Activated B cell treated with CpG ODN at 0.5 μM for 24 hours (primary cell): ENCODE measurements at regions of chr21 and their contacts with region 1.

Region 1: GRCh38 chr21:37445228-37445627 is 78.7 kb downstream of the DYRK1A start:
- DNase-seq: no peak
- ATAC-seq: no peak
- H3K4me3 Mint-ChIP-seq: no peak overlapping the region
- H3K27ac Mint-ChIP-seq: no peak overlapping the region
- H3K4me1 Mint-ChIP-seq: peaks cover 78% of the 10 kb centered on the region
- H3K27me3 Mint-ChIP-seq: no peaks in the 10 kb centered on the region
- CTCF ChIP-seq: no peak

Region 2: DNA sequence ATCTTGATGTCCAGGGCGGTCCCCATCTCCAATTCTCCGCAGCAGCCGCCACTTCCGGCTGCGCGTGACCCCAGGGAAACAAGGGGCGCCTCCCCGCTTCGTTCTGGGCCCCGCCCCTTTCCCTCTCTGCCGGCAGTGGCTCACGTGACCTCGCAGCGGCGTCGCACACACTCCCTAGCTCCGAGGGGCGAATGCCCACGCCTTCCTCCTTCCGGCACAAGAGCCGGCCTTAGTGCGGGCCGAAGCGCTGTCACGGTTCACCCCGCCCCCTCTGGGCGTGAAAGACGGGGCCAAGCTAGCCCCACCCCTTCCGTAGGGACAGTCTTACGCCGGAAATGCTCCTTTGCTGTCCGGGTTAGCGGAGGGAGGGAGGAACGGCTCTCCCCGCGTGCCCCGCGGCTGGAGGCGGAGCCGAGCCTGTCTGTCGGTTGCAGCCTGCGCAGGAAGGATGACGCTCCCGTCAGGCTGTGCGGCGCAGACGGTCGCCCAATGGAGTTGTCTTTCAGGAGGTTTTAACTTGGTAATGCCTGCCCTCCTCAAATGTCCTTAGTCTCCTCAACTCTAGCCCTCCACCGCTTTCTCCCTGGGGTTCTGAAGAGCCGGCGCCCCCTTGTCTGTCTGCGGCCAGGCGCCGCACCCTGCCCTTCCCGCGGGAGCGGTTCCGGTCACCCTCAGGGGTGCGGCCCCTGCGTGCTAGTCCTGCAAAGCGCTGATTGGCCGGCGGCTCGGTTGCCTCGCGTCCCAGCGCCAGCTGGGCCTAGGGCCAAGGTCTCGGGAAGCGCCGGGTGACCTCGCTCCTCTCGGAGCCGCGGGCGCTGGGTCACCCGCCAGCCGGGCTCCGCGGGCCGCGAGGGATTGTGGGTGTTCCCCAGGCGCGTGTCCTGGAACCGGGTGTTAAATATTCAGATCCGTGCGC is 177.7 kb before region 1 on chr21 and contains the start of gene VPS26C:
- CTCF ChIA-PET with region 1: no interaction called
- POLR2A ChIA-PET with region 1: no interaction called
- intact Hi-C with region 1: no loop called
- DNase-seq: peak; percentile 94
- ATAC-seq: peak; percentile 86
- H3K4me3 Mint-ChIP-seq: peak within 1 kb of the TSS; percentile 96
- H3K27ac Mint-ChIP-seq: peak within 1 kb of the TSS; percentile 97
- H3K4me1 Mint-ChIP-seq: peaks cover 29% of the 10 kb centered on the region
- H3K27me3 Mint-ChIP-seq: peaks cover 6% of the 10 kb centered on the region
- CTCF ChIP-seq: no peak
- total RNA-seq, gene VPS26C: 42.5 and 45.2 TPM in 2 replicates

Region 3: DNA sequence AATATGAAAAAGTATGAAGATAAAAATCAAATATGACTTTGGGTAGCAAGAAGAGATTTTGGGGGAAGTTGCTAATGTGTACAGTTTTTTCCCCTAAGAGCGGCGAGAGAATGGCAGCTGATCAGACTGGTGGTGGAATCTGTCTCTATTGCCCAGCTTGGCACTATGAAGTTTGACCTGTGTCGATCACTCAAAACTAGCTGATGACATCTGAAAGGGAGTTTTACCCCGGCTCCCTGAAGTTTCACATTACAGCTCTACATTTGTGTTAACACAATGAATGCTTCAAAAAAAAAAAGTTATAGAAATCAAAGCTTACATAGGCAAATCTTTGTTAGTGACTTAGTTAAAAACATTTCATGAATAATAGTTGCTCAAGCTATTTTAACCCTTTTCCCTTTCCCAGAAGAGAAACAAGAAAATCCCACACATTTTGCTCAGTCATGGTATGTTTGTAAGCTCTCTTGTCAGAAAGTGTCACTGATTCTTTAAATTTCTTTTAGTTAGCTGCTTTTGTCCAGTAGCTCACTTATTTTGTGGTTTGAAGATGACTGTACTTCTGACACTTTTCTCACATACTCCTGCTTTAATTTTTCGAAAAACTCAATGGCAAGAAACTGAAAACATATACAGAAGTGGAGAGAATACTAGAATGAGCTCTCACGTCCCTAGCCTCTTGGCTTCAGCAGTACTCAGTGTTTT is 37.4 kb before region 1 on chr21:
- CTCF ChIA-PET with region 1: no interaction called
- POLR2A ChIA-PET with region 1: no interaction called
- intact Hi-C with region 1: loop called (anchors 5 kb)
- DNase-seq: no peak
- ATAC-seq: no peak
- H3K4me3 Mint-ChIP-seq: no peak overlapping the region
- H3K27ac Mint-ChIP-seq: no peak overlapping the region
- H3K4me1 Mint-ChIP-seq: peaks cover 85% of the 10 kb centered on the region
- H3K27me3 Mint-ChIP-seq: no peaks in the 10 kb centered on the region
- CTCF ChIP-seq: no peak